ENCODE measurements at regions of chr5 and their contacts with region 1.

Region 1: GRCh38 chr5:72018146-72018803 is 89.0 kb upstream of the MAP1B start:
- DNase-seq: peak; percentile 73
- H3K4me3 Mint-ChIP-seq: no peak overlapping the region
- H3K27ac Mint-ChIP-seq: no peak overlapping the region
- H3K4me1 Mint-ChIP-seq: peaks cover 8% of the 10 kb centered on the region
- H3K27me3 Mint-ChIP-seq: peaks cover 23% of the 10 kb centered on the region
- CTCF ChIP-seq: peak; percentile 91

Region 2: GRCh38 chr5:71836084-71836483 is 182.2 kb before region 1 on chr5:
- CTCF ChIA-PET with region 1: interaction called, 3 read pairs
- POLR2A ChIA-PET with region 1: no interaction called
- intact Hi-C with region 1: loop called (anchors 5 kb)
- DNase-seq: peak; percentile 9
- H3K4me3 Mint-ChIP-seq: no peak overlapping the region
- H3K27ac Mint-ChIP-seq: no peak overlapping the region
- H3K4me1 Mint-ChIP-seq: peaks cover under 1% of the 10 kb centered on the region
- H3K27me3 Mint-ChIP-seq: no peaks in the 10 kb centered on the region
- CTCF ChIP-seq: peak; percentile 20

Region 3: GRCh38 chr5:71922584-71923106 is 95.6 kb before region 1 on chr5:
- CTCF ChIA-PET with region 1: interaction called, 3 read pairs
- POLR2A ChIA-PET with region 1: no interaction called
- intact Hi-C with region 1: loop called (anchors 1 kb)
- DNase-seq: peak; percentile 91
- H3K4me3 Mint-ChIP-seq: no peak overlapping the region
- H3K27ac Mint-ChIP-seq: peak overlapping the region; percentile 71
- H3K4me1 Mint-ChIP-seq: peaks cover 26% of the 10 kb centered on the region
- H3K27me3 Mint-ChIP-seq: no peaks in the 10 kb centered on the region
- CTCF ChIP-seq: no peak

Region 4: GRCh38 chr5:72032788-72033187 is 14.5 kb after region 1 on chr5:
- CTCF ChIA-PET with region 1: interaction called, 13 read pairs
- POLR2A ChIA-PET with region 1: no interaction called
- intact Hi-C with region 1: no loop called
- DNase-seq: no peak
- H3K4me3 Mint-ChIP-seq: no peak overlapping the region
- H3K27ac Mint-ChIP-seq: no peak overlapping the region
- H3K4me1 Mint-ChIP-seq: peaks cover 9% of the 10 kb centered on the region
- H3K27me3 Mint-ChIP-seq: peaks cover 37% of the 10 kb centered on the region
- CTCF ChIP-seq: no peak